CD8-positive, alpha-beta T cell (primary cell): ENCODE measurements at regions of chr1 and their contacts with region 1.

Region 1: GRCh38 chr1:17045634-17046333 is 8.0 kb downstream of the SDHB start:
- DNase-seq: peak in 2 of 9 experiments; percentile 36 to 55
- ATAC-seq: peak; percentile 34
- H3K4me3 ChIP-seq: no peak overlapping the region
- H3K4me3 Mint-ChIP-seq: peak overlapping the region; percentile 39
- H3K27ac ChIP-seq: no peak overlapping the region
- H3K27ac Mint-ChIP-seq: peak overlapping the region; percentile 45
- H3K4me1 ChIP-seq: peaks cover 6% of the 10 kb centered on the region
- H3K4me1 Mint-ChIP-seq: peaks cover 16% of the 10 kb centered on the region
- H3K27me3 ChIP-seq: no peaks in the 10 kb centered on the region
- H3K27me3 Mint-ChIP-seq: no peaks in the 10 kb centered on the region
- CTCF ChIP-seq: no peak

Region 2: GRCh38 chr1:16904560-16905111 is 141.1 kb before region 1 on chr1:
- CTCF ChIA-PET with region 1: no interaction called
- POLR2A ChIA-PET with region 1: interaction called, 4 read pairs
- intact Hi-C with region 1: loop called in 1 of 2 experiments (anchors 2 kb)
- DNase-seq: peak; percentile 97 to 100 (median 99)
- ATAC-seq: peak; percentile 95
- H3K4me3 ChIP-seq: peak overlapping the region; percentile 50
- H3K4me3 Mint-ChIP-seq: no peak overlapping the region
- H3K27ac ChIP-seq: peak overlapping the region; percentile 97 to 99
- H3K27ac Mint-ChIP-seq: no peak overlapping the region
- H3K4me1 ChIP-seq: peaks cover 44% of the 10 kb centered on the region
- H3K4me1 Mint-ChIP-seq: peaks cover 32% of the 10 kb centered on the region
- H3K27me3 ChIP-seq: no peaks in the 10 kb centered on the region
- H3K27me3 Mint-ChIP-seq: no peaks in the 10 kb centered on the region
- CTCF ChIP-seq: no peak

Region 3: DNA sequence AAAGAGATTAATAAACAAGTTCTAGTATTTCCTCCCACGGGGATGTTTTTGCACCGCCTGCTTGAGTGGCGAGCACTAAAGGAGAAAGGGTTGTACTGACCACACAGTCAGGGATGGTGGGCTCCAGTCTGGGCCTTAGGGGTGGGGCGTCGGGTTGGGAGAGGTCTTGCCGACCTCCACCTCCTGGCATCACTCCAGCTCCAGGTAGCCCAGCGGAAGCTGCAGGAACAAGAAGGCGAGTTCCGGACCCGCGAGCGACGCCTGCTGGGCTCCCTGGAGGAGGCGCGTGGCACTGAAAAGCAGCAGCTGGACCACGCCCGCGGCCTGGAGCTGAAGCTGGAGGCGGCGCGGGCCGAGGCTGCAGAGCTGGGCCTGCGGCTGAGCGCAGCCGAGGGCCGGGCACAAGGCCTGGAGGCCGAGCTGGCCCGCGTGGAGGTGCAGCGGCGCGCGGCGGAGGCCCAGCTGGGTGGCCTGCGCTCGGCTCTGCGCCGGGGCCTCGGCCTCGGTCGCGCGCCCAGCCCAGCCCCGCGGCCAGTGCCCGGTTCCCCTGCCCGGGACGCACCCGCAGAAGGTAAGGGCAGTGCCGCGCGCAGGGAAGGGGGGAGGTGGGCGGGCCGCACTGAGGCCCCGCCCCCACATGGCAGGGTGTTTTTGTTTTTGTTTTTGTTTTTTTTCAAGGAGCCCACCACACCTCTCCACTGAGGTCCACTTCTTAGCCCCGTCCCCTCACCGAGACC is 85.1 kb before region 1 on chr1:
- CTCF ChIA-PET with region 1: interaction called, 12 read pairs
- POLR2A ChIA-PET with region 1: no interaction called
- intact Hi-C with region 1: no loop called
- DNase-seq: peak; percentile 37 to 83 (median 76)
- ATAC-seq: peak; percentile 87
- H3K4me3 ChIP-seq: peak overlapping the region; percentile 39 to 41
- H3K4me3 Mint-ChIP-seq: peak overlapping the region; percentile 80
- H3K27ac ChIP-seq: no peak overlapping the region
- H3K27ac Mint-ChIP-seq: no peak overlapping the region
- H3K4me1 ChIP-seq: no peaks in the 10 kb centered on the region
- H3K4me1 Mint-ChIP-seq: peaks cover 10% of the 10 kb centered on the region
- H3K27me3 ChIP-seq: no peaks in the 10 kb centered on the region
- H3K27me3 Mint-ChIP-seq: no peaks in the 10 kb centered on the region
- CTCF ChIP-seq: peak; percentile 73

Region 4: GRCh38 chr1:17075470-17076255 is 29.9 kb after region 1 on chr1:
- CTCF ChIA-PET with region 1: no interaction called
- POLR2A ChIA-PET with region 1: no interaction called
- intact Hi-C with region 1: no loop called
- DNase-seq: peak in 2 of 9 experiments; percentile 27 to 28
- ATAC-seq: no peak
- H3K4me3 ChIP-seq: no peak overlapping the region
- H3K4me3 Mint-ChIP-seq: no peak overlapping the region
- H3K27ac ChIP-seq: no peak overlapping the region
- H3K27ac Mint-ChIP-seq: no peak overlapping the region
- H3K4me1 ChIP-seq: no peaks in the 10 kb centered on the region
- H3K4me1 Mint-ChIP-seq: no peaks in the 10 kb centered on the region
- H3K27me3 ChIP-seq: peaks cover 0 to 3% of the 10 kb centered on the region in 2 experiments
- H3K27me3 Mint-ChIP-seq: no peaks in the 10 kb centered on the region
- CTCF ChIP-seq: no peak